Transverse colon (tissue), 4 donors: ENCODE measurements at regions of chr5 and their contacts with region 1.

Region 1: GRCh38 chr5:83614841-83615240 is 105.8 kb downstream of the HAPLN1 start:
- DNase-seq: no peak
- H3K4me3 ChIP-seq: no peak overlapping the region
- H3K27ac ChIP-seq: no peak overlapping the region
- H3K4me1 ChIP-seq: no peaks in the 10 kb centered on the region
- H3K27me3 ChIP-seq: no peaks in the 10 kb centered on the region
- CTCF ChIP-seq: no peak
- EP300 ChIP-seq: no peak
- POLR2A ChIP-seq: no peak

Region 2: DNA sequence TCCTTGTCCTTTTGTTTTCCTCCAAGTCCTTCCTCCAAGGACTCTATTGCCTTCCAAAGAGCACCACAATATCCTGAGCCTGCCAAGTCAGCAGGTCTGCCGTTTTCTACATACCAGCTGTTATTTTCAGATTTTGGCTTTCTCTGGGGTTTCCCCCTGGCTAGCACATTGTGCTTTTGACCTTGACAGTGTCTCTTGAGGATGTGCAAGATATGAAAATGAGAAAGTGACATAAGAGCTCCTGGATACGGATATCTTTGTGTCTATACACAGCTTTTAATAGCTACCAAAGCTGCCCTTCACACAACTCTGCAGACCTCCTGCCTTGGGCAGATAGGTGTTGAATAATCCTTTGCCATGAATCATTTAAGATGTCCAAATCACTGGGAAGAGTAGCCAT is 38.8 kb after region 1 on chr5:
- in situ Hi-C with region 1: no loop called
- intact Hi-C with region 1: loop called (anchors 2 kb)
- DNase-seq: no peak
- H3K4me3 ChIP-seq: no peak overlapping the region
- H3K27ac ChIP-seq: no peak overlapping the region
- H3K4me1 ChIP-seq: no peaks in the 10 kb centered on the region
- H3K27me3 ChIP-seq: no peaks in the 10 kb centered on the region
- CTCF ChIP-seq: no peak
- EP300 ChIP-seq: no peak
- POLR2A ChIP-seq: no peak

Region 3: DNA sequence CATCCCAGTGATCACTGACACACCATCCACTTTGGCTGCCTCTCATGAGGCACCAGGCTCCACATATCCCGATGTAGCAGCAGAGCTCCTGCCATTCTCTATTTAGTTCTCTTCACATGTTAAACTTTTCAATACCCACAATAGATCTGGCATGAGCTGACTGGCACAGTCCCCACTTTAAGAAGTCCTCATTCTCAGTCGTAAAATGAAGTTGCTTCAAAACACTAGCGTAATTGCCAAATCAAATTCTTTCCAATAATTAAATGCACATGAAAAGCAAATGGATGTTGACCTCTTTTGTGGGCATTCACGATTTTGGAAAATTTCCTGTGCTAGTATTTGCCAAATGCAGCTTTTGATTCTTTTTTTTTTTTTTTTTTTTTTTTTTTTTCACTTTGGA is 73.4 kb after region 1 on chr5:
- in situ Hi-C with region 1: no loop called
- intact Hi-C with region 1: no loop called
- DNase-seq: no peak
- H3K4me3 ChIP-seq: no peak overlapping the region
- H3K27ac ChIP-seq: no peak overlapping the region
- H3K4me1 ChIP-seq: no peaks in the 10 kb centered on the region
- H3K27me3 ChIP-seq: no peaks in the 10 kb centered on the region
- CTCF ChIP-seq: no peak
- EP300 ChIP-seq: no peak
- POLR2A ChIP-seq: no peak